ENCODE measurements at regions of chr12 and their contacts with region 1.

Region 1: DNA sequence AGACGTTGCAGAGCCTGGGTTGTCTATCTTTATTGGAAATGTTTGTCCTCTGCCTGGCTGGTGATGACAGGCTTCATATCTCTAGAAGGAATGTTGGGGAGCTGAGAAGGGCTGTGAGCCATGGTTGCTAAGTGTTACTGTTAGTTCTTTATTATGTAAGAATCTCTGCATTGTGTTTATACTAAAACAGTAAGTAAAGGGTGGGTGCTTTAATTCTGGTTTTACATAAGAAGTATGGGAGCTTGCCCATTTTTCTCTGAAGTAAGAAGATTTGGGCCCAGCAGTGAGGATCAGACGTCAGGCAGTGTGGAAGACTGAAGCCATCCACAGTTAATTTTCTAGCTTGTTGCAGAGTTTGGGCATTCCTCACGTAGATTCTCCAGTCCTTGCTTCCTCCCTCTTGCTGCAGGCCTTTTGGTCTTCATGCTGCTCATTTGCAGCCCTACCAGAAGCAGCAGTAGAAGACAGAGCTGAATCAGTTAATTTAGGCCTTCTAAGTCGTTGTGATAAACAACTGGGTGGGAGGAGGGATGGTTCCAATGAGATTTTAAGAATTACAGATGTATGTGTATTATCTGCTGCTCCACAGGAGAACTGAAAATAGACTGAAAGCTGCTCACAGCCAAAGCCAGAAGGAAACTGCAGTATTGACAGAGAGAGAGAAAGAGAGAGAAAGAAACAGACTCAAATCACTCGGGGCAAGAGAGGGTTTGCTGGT is 21.4 kb downstream of the WNT5B start:
- DNase-seq: no peak
- ATAC-seq: no peak

Region 2: GRCh38 chr12:1760566-1761382 is 110.4 kb after region 1 on chr12:
- intact Hi-C with region 1: no loop called
- DNase-seq: no peak
- ATAC-seq: no peak

Region 3: GRCh38 chr12:1795785-1796514 is 145.5 kb after region 1 on chr12:
- intact Hi-C with region 1: loop called (anchors 2 to 10 kb)
- DNase-seq: peak; percentile 94 to 95
- ATAC-seq: peak; percentile 88

Region 4: DNA sequence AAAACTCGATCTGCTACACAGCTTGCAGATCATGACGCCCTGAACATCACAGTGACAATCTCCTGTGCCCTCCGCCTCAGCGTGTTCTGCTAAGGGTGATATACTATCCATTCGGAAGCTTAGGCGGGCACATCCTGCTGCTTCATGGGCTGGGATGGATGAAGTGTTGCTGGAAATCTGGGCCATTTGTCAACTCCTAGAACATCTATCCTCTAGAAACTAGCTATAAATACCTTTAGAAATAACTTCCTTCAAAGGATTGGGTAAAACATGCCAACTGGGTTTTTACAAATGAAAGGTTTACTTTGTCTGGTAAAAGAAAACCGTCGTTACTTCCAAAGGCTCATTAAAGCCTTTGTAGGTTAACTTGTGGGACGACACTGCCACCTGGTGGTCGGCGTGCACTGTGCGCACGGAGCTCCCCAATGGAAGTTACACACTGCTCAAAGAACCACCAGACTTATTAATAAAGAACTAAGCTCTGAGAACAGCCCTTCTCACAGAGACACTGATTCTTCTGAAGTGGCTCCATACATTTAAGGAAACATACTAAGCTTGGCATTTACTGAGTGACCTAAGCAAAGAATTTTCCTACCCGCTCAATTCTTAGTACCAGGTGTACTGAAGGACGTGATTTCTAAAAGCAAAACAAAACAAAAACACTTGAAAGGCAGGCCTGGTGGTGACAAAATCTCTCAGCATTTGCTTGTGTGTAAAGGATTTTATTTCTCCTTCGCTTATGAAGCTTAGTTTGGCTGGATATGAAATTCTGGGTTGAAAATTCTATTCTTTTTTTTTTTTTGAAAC is 289.6 kb after region 1 on chr12:
- intact Hi-C with region 1: loop called in 1 of 2 experiments (anchors 10 kb)
- DNase-seq: peak; percentile 83 to 92
- ATAC-seq: peak; percentile 56

Measured in left colon (tissue), 2 donors.